ENCODE measurements at regions of chr17 and their contacts with region 1.

Region 1: DNA sequence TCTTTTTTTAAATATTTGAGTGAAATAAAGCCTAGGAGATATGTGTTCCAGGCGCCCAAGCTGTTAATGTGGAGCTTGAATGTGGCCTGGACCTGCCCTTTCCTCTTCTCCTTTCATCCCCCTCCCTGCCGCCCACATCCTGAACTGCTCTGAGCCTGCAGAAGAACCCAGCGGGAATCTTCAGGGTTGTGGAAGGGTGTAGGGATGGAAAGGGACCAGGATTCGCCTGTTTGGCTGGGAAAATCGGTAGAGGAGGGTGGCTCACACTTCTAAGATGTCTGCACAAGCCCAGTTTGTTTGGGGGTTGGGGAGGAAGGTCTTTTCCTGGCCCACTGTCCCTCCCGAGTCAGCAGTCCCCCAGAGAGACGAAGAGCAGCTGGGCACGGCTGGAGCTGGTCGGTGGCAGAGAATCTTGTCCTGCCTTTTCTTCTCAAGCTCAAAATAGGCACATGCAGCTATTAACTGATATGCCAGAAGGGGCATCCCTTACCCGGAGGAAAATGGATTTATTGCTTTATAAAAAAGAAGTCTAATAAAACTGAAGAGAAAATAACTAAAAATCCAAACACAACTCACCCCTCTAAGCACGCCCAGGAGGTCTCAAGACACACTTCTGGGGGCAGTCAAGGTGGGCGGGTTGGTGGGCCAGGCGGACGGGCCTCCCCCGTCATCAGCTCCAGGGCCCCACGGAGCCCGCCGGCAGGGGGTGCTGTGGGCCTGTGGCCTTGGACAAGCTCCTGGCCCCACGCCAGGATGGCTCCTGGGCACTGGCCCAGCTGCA is 11.5 kb upstream of the PITPNA start:
- DNase-seq: peak; percentile 70
- H3K4me3 Mint-ChIP-seq: no peak overlapping the region
- H3K27ac Mint-ChIP-seq: no peak overlapping the region
- H3K4me1 Mint-ChIP-seq: peaks cover 3% of the 10 kb centered on the region
- H3K27me3 Mint-ChIP-seq: no peaks in the 10 kb centered on the region

Region 2: DNA sequence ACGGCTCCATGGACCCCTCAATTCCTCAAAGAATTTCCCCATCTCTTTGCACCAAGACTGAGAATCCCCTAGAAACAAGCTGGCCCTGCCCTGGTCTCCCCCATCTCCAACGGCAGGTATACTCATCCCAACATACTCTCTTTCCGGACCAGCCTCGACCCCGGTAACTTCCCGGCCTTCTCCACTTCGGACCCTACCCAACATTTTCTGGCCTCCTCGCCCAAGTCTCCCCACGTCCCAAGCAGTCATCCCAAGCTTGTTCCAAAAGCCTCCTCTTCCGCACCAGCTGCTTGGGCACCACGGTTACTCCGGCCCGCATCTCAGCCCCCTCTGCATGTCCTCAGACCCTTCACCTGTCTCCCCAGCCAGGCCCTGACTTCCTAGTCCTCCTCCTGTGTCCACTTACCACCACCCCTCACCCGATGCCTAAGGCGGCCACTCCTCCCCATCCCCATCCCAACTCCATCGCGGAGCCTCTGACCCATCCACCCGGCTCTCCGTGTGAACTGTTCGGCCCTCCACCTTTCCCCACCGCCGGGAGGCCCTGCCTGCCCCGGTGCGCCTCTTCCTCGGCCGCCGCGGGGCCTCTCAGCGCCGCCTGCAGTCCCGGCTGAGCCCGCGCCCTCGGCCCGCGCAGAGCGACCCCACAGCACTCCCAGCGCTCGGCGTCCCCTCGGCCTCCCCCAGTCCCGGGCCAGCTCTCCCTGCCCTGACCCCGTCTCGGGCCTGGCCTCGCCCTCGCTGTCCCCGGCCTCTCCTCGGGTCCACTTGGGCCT is 12.5 kb before region 1 on chr17:
- CTCF ChIA-PET with region 1: interaction called, 10 read pairs
- POLR2A ChIA-PET with region 1: no interaction called
- DNase-seq: peak; percentile 39
- H3K4me3 Mint-ChIP-seq: peak overlapping the region; percentile 78
- H3K27ac Mint-ChIP-seq: no peak overlapping the region
- H3K4me1 Mint-ChIP-seq: peaks cover 41% of the 10 kb centered on the region
- H3K27me3 Mint-ChIP-seq: peaks cover 5% of the 10 kb centered on the region

Region 3: DNA sequence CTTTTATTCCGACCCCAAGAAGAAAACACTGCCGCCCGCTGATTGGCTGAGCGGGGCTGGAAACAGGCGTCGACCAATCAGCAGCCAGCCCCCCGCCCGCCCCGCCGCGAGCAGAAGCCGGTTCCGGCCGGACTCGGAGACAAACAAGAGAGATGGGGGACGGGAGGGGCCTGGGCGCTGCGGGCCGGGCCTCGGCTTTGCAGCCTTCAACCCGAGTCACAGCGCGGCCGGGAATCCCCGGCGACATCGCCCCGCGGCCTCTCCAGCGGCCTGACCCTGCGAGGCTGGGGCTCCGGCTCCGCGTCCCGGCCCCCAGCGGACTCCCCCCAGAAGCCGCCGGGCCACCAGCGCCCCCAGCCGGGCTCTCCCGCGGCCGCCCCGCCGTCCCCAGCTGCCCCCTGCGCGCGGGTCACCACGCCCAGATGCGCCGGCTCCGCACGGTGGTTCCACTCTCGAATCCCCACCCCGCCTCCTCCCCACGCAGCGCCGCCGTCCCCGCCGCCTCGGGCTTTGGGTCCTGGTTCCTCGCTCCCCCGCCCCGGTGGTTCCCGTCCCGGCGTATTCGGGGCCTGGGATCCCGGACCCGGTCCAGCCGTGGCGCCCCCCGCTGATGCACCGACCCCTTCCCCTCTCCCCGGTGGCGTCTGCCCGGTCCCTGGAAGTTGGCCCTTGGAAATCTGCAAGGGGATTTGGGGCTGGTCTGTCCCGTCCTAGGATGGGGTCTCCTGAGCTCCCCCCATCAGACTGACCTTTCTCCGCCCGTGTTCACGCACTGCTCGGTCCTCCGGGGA is 54.9 kb after region 1 on chr17:
- CTCF ChIA-PET with region 1: interaction called, 33 read pairs
- POLR2A ChIA-PET with region 1: interaction called, 3 read pairs
- DNase-seq: peak; percentile 89
- H3K4me3 Mint-ChIP-seq: peak overlapping the region; percentile 83
- H3K27ac Mint-ChIP-seq: peak overlapping the region; percentile 53
- H3K4me1 Mint-ChIP-seq: peaks cover 17% of the 10 kb centered on the region
- H3K27me3 Mint-ChIP-seq: peaks cover 40% of the 10 kb centered on the region

Region 4: GRCh38 chr17:1709971-1710806 is 136.1 kb after region 1 on chr17 and contains the start of gene TLCD2:
- CTCF ChIA-PET with region 1: no interaction called
- POLR2A ChIA-PET with region 1: no interaction called
- DNase-seq: no peak
- H3K4me3 Mint-ChIP-seq: peak within 1 kb of the TSS; percentile 50
- H3K27ac Mint-ChIP-seq: no peak within 1 kb of the TSS
- H3K4me1 Mint-ChIP-seq: peaks cover 55% of the 10 kb centered on the region
- H3K27me3 Mint-ChIP-seq: peaks cover 15% of the 10 kb centered on the region
- total RNA-seq, gene TLCD2: 0.65 to 0.75 TPM

Measured in activated CD4-positive, alpha-beta memory T cell treated with anti-CD3 and anti-CD28 coated beads, Interleukin-2, amount 10 ng/mL, durations not matched to agents 7 days and 5 days (primary cell).